GM12878 (cell line): ENCODE measurements at regions of chr12 and their contacts with region 1.

Region 1: DNA sequence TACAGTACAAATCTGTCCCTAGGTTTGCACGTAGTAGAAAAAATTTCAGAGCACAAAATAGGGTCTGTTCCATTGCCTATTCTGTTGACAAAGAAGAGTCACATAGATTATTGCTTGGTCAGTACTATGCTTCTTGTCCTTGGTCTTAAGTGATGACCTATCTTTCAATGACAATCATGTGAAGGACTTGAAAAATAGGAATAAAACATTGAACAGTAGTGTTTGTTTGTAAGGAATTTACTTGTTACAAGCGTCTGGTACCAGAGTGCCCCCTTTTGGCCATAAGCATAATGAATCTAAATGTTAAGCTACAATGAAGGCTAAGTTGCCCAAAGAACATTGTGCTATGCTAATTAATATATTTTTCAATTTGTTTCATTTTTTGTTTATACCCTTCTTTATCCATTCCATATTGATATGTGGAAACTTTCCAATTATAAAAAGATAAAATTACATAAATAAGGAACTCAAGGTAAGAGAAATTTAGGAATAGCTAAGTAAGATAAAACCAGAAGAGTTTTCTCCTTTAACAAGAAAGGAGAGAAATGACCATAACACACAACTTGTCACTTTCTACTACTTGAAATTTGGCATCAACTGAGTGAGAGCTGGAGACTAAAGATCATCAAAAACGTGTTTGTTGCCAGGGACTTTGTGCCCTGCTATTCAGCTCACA is 204.7 kb downstream of the EPS8 start:
- DNase-seq: no peak
- ATAC-seq: peak; percentile 78
- H3K4me3 ChIP-seq: no peak overlapping the region
- H3K27ac ChIP-seq: no peak overlapping the region
- H3K4me1 ChIP-seq: no peaks in the 10 kb centered on the region
- H3K27me3 ChIP-seq: 0 out of 4 replicates have a peak, but pooled peaks cover 0 to 1% of the 10 kb centered on the region in 2 experiments
- CTCF ChIP-seq: peak; percentile 68 to 81 (median 69)
- EP300 ChIP-seq: no peak
- POLR2A ChIP-seq: no peak
- RAD21 ChIP-seq: peak; percentile 93

Region 2: DNA sequence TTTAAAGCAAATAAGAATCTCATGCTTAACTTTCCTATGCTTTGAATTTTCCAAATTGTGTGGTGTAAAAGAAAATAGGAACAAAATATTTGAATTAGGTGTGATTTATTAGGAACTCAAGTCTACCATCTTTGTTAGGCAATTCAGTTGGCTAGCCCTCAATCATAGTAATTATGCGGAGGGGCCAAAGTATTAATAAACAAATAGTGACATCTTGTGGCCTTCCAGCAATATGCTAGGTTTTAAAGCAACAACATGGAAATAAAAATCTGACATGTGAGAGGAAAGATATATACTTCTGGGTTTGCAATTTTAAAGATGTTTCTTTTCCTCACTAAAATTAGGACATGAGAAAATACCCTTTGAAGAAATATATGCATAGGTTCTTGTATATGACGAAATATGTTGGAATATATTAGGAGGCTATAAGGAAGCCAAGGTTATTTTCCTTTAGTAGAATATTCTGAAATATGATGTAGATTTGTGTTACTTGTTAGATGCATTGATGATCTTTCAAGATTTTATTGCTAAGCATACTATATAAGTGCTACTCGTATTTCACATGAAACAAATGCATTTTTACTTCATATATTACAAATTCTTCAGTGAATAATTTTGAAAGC is 61.8 kb before region 1 on chr12:
- CTCF ChIA-PET with region 1: interaction called, 1,078 read pairs
- POLR2A ChIA-PET with region 1: interaction called, 4 read pairs
- RAD21 ChIA-PET with region 1: interaction called, 609 read pairs
- SMC1A ChIA-PET with region 1: interaction called, 853 read pairs
- in situ Hi-C with region 1: no loop called
- intact Hi-C with region 1: no loop called
- DNase-seq: no peak
- ATAC-seq: peak; percentile 29; the same call in 2 of the 3 replicates
- H3K4me3 ChIP-seq: no peak overlapping the region
- H3K27ac ChIP-seq: no peak overlapping the region
- H3K4me1 ChIP-seq: no peaks in the 10 kb centered on the region
- H3K27me3 ChIP-seq: no peaks in the 10 kb centered on the region
- CTCF ChIP-seq: peak; percentile 38 to 74 (median 52); a peak in 5 of 6 replicates
- EP300 ChIP-seq: no peak
- POLR2A ChIP-seq: no peak
- RAD21 ChIP-seq: peak; percentile 82

Region 3: DNA sequence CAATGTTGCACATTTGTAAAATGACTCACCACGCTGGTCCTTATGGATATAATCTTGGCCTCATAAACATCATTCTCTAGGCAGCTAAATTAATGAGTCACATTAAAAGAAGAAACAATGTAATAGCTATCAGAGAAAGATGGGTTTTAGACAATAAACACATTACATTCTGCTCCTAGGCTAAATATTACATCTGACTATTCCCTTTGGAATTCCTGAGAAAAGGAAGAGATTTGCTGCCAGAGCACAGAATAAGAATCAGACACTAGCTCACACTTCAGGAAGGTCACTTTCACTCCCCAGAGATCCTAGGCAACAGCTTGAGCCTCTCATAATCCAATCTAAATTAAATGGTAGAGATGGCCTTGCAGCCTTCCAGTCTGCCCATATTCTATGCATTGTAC is 44.0 kb before region 1 on chr12:
- CTCF ChIA-PET with region 1: interaction called, 1,078 read pairs
- POLR2A ChIA-PET with region 1: interaction called, 7 read pairs
- RAD21 ChIA-PET with region 1: interaction called, 609 read pairs
- SMC1A ChIA-PET with region 1: interaction called, 853 read pairs
- in situ Hi-C with region 1: no loop called
- intact Hi-C with region 1: no loop called
- DNase-seq: no peak
- ATAC-seq: no peak
- H3K4me3 ChIP-seq: no peak overlapping the region
- H3K27ac ChIP-seq: no peak overlapping the region
- H3K4me1 ChIP-seq: peaks cover 7% of the 10 kb centered on the region
- H3K27me3 ChIP-seq: no peaks in the 10 kb centered on the region
- CTCF ChIP-seq: no peak
- EP300 ChIP-seq: no peak
- POLR2A ChIP-seq: no peak
- RAD21 ChIP-seq: no peak

Region 4: GRCh38 chr12:15563663-15564062 is 20.8 kb before region 1 on chr12:
- CTCF ChIA-PET with region 1: interaction called, 137 read pairs
- POLR2A ChIA-PET with region 1: interaction called, 3 read pairs
- RAD21 ChIA-PET with region 1: interaction called, 79 read pairs
- SMC1A ChIA-PET with region 1: interaction called, 81 read pairs
- in situ Hi-C with region 1: no loop called
- intact Hi-C with region 1: no loop called
- DNase-seq: no peak
- ATAC-seq: no peak
- H3K4me3 ChIP-seq: no peak overlapping the region
- H3K27ac ChIP-seq: no peak overlapping the region
- H3K4me1 ChIP-seq: no peaks in the 10 kb centered on the region
- H3K27me3 ChIP-seq: no peaks in the 10 kb centered on the region
- CTCF ChIP-seq: no peak
- EP300 ChIP-seq: no peak
- POLR2A ChIP-seq: no peak
- RAD21 ChIP-seq: no peak

Region 5: GRCh38 chr12:15608941-15609340 is 24.4 kb after region 1 on chr12:
- CTCF ChIA-PET with region 1: interaction called, 8 read pairs
- POLR2A ChIA-PET with region 1: no interaction called
- RAD21 ChIA-PET with region 1: interaction called, 6 read pairs
- SMC1A ChIA-PET with region 1: interaction called, 16 read pairs
- in situ Hi-C with region 1: no loop called
- intact Hi-C with region 1: no loop called
- DNase-seq: no peak
- ATAC-seq: no peak
- H3K4me3 ChIP-seq: no peak overlapping the region
- H3K27ac ChIP-seq: no peak overlapping the region
- H3K4me1 ChIP-seq: no peaks in the 10 kb centered on the region
- H3K27me3 ChIP-seq: no peaks in the 10 kb centered on the region
- CTCF ChIP-seq: no peak
- EP300 ChIP-seq: no peak
- POLR2A ChIP-seq: no peak
- RAD21 ChIP-seq: no peak

Region 6: GRCh38 chr12:15842108-15842507 is 257.6 kb after region 1 on chr12:
- CTCF ChIA-PET with region 1: interaction called, 478 read pairs
- POLR2A ChIA-PET with region 1: no interaction called
- RAD21 ChIA-PET with region 1: interaction called, 21 read pairs
- SMC1A ChIA-PET with region 1: interaction called, 466 read pairs
- in situ Hi-C with region 1: no loop called
- intact Hi-C with region 1: no loop called
- DNase-seq: no peak
- ATAC-seq: no peak
- H3K4me3 ChIP-seq: no peak overlapping the region
- H3K27ac ChIP-seq: no peak overlapping the region
- H3K4me1 ChIP-seq: no peaks in the 10 kb centered on the region
- H3K27me3 ChIP-seq: no peaks in the 10 kb centered on the region; a peak in 1 of 4 replicates
- CTCF ChIP-seq: no peak
- EP300 ChIP-seq: no peak
- POLR2A ChIP-seq: no peak
- RAD21 ChIP-seq: no peak